Activated CD8-positive, alpha-beta T cell treated with anti-CD3 and anti-CD28 coated beads, Interleukin-2, amount 10 ng/mL, durations not matched to agents 7 days and 5 days (primary cell): ENCODE measurements at regions of chr9 and their contacts with region 1.

Region 1: GRCh38 chr9:35603987-35604577 is 980 bp upstream of the TESK1 start:
- DNase-seq: peak; percentile 100
- ATAC-seq: peak; percentile 88
- H3K4me3 Mint-ChIP-seq: peak overlapping the region; percentile 90
- H3K27ac Mint-ChIP-seq: peak overlapping the region; percentile 96
- H3K4me1 Mint-ChIP-seq: peaks cover 37% of the 10 kb centered on the region
- H3K27me3 Mint-ChIP-seq: no peaks in the 10 kb centered on the region

Region 2: GRCh38 chr9:35481347-35481975 is 122.6 kb before region 1 on chr9:
- CTCF ChIA-PET with region 1: interaction called, 11 read pairs
- POLR2A ChIA-PET with region 1: no interaction called
- DNase-seq: peak; percentile 43
- ATAC-seq: no peak
- H3K4me3 Mint-ChIP-seq: no peak overlapping the region
- H3K27ac Mint-ChIP-seq: no peak overlapping the region
- H3K4me1 Mint-ChIP-seq: no peaks in the 10 kb centered on the region
- H3K27me3 Mint-ChIP-seq: peaks cover 4% of the 10 kb centered on the region

Region 3: GRCh38 chr9:35510745-35511428 is 93.2 kb before region 1 on chr9:
- CTCF ChIA-PET with region 1: no interaction called
- POLR2A ChIA-PET with region 1: no interaction called
- DNase-seq: no peak
- ATAC-seq: no peak
- H3K4me3 Mint-ChIP-seq: no peak overlapping the region
- H3K27ac Mint-ChIP-seq: no peak overlapping the region
- H3K4me1 Mint-ChIP-seq: peaks cover 4% of the 10 kb centered on the region
- H3K27me3 Mint-ChIP-seq: peaks cover 11% of the 10 kb centered on the region

Region 4: GRCh38 chr9:35657546-35658136 is 53.6 kb after region 1 on chr9 and contains the start of gene RMRP:
- CTCF ChIA-PET with region 1: interaction called, 125 read pairs
- POLR2A ChIA-PET with region 1: interaction called, 4 read pairs
- DNase-seq: peak; percentile 94
- ATAC-seq: peak; percentile 92
- H3K4me3 Mint-ChIP-seq: peak within 1 kb of the TSS; percentile 92
- H3K27ac Mint-ChIP-seq: peak within 1 kb of the TSS; percentile 97
- H3K4me1 Mint-ChIP-seq: peaks cover 62% of the 10 kb centered on the region
- H3K27me3 Mint-ChIP-seq: peaks cover 3% of the 10 kb centered on the region
- total RNA-seq, gene RMRP: 7,126 to 12,592 TPM

Region 5: GRCh38 chr9:35664531-35665470 is 60.7 kb after region 1 on chr9 and contains the start of gene ARHGEF39:
- CTCF ChIA-PET with region 1: interaction called, 125 read pairs
- POLR2A ChIA-PET with region 1: interaction called, 6 read pairs
- DNase-seq: peak; percentile 84
- ATAC-seq: peak; percentile 84
- H3K4me3 Mint-ChIP-seq: peak within 1 kb of the TSS; percentile 86
- H3K27ac Mint-ChIP-seq: peak within 1 kb of the TSS; percentile 86
- H3K4me1 Mint-ChIP-seq: peaks cover 68% of the 10 kb centered on the region
- H3K27me3 Mint-ChIP-seq: no peaks in the 10 kb centered on the region
- total RNA-seq, gene ARHGEF39: 17.2 to 17.3 TPM